OCI-LY7 (cell line): ENCODE measurements at regions of chr18 and their contacts with region 1.

Region 1: GRCh38 chr18:21489119-21489750 is 111.3 kb downstream of the ESCO1 start:
- DNase-seq: peak; percentile 67
- H3K4me3 ChIP-seq: no peak overlapping the region
- H3K27ac ChIP-seq: no peak overlapping the region
- H3K4me1 ChIP-seq: peaks cover 5% of the 10 kb centered on the region
- CTCF ChIP-seq: peak; percentile 93

Region 2: DNA sequence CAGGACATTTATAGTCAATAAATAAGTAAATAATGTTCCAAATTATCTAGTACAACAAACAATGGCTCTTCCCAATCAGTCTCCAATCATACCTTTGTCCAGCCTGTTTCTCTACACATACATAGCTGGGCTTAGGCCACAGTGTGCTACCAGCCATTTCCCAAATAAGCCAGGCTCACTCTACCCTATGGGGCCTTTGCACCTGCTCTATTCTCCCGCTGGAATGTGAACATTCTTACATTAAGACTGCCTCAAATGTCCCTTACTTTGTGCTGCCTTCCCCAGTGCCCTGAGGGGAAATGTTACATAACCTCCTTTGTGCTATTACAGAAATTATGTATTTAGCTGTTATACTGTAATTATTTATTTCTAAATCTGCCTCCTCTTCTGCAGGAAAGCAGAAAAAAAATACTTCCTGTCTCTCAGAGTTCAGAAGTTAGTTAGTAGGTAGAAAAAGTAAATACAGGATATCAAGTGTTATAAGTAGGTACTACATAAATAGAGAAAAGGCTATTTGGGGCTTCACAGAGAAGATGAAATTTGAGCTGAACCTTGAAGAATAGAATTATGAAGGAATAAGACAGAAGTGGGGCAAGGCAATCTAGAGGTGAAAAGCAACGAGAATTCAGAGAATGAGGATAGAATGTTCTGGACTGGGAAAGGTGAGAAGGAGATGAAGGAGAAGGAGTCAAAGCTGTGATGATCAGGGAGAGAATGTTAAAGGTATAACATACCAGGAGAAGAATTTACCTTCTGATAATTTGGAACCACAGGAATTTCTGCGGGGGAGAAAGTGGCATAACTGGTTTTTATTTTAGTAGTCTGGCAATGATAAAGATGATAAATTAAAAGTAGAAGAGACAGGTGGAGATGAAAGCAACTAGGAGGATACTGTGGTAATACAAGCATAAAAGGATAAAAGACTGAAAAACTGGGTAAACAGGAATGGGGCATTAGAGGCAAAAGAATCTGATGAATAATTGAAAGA is 414.6 kb before region 1 on chr18:
- CTCF ChIA-PET with region 1: no interaction called
- POLR2A ChIA-PET with region 1: no interaction called
- intact Hi-C with region 1: no loop called
- DNase-seq: peak; percentile 15
- H3K4me3 ChIP-seq: peak overlapping the region; percentile 36
- H3K27ac ChIP-seq: peak overlapping the region; percentile 33
- H3K4me1 ChIP-seq: peaks cover 44% of the 10 kb centered on the region
- CTCF ChIP-seq: no peak

Region 3: GRCh38 chr18:21851327-21851972 is 362.2 kb after region 1 on chr18:
- CTCF ChIA-PET with region 1: no interaction called
- POLR2A ChIA-PET with region 1: no interaction called
- intact Hi-C with region 1: loop called (anchors 5 kb)
- DNase-seq: peak; percentile 32
- H3K4me3 ChIP-seq: no peak overlapping the region
- H3K27ac ChIP-seq: no peak overlapping the region
- H3K4me1 ChIP-seq: peaks cover 28% of the 10 kb centered on the region
- CTCF ChIP-seq: peak; percentile 77

Region 4: GRCh38 chr18:22408059-22408458 is 918.8 kb after region 1 on chr18:
- CTCF ChIA-PET with region 1: no interaction called
- POLR2A ChIA-PET with region 1: no interaction called
- intact Hi-C with region 1: no loop called
- DNase-seq: peak; percentile 1
- H3K4me3 ChIP-seq: no peak overlapping the region
- H3K27ac ChIP-seq: no peak overlapping the region
- H3K4me1 ChIP-seq: no peaks in the 10 kb centered on the region
- CTCF ChIP-seq: peak; percentile 41; the same call in 1 of the 2 replicates